ENCODE measurements at regions of chr3 and their contacts with region 1.

Region 1: DNA sequence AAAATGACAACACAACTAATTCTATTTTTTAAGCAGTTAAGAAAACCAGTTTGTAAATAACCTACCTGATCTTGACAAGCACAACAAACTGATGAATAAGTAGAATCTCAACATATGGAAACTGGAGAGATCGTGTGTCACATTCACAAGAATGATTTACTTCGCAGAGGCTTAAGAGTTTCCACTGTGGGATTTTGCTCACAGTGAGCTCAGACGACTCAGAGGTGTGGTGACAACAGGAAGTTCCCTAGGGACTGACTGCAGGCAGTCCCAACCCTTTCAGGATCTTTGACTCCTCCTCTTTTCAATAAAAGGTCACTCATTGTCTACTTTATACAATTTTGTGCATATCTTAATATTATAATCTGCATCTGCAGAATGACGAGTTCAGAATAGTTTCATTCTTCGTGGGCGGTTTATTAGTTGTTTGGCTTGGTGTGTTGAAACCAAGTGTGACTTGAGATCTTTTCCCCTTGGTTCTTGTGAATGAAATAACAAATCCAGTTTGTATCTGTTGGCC is at the start of gene LIPH:
- DNase-seq: peak; percentile 61 to 96
- H3K4me3 ChIP-seq: peak within 1 kb of the TSS; percentile 61
- H3K27ac ChIP-seq: peak within 1 kb of the TSS; percentile 93
- H3K4me1 ChIP-seq: peaks cover 81% of the 10 kb centered on the region
- H3K27me3 ChIP-seq: no peaks in the 10 kb centered on the region
- CTCF ChIP-seq: no peak
- total RNA-seq, gene LIPH: 38.4 and 44.7 TPM in 2 replicates

Region 2: DNA sequence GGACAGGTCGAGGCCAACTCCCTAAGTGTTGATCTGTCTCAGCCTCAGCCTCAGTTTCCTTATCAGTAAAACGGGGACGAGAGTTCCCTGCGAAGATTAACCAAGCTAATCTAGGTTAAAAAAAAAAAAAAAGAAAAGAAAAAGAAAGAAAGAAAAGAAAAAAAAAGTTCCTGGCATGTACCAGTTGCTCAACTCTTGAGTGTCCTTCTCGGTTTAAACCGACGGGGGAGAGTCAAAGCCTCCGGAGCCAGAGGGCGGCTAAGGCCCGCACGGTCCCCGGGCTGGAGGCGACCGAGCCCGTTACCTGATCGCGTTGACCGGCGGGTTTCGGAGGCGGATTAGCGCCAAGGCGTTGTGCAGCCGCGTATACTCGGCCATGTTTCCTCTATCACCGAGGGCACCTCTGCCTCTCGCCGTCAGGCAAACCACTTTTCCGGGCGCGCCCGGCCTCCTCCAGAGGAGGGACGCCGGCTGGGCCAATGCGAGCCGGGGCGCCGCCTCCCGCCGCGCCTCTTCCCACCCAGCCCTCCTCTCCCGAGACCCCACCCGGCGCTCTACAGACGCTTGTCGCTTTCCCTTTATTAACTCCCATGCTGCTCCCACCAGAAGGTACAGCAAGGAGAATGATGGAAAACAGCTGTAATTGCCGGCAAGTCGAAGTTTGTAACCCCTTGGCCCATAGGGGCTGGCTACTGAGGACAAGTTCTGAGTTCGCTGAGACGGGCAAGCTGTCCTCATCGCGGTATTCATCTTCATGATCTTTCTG is 298.6 kb before region 1 on chr3 and contains the start of gene EHHADH:
- CTCF ChIA-PET with region 1: no interaction called
- POLR2A ChIA-PET with region 1: interaction called, 12 read pairs
- intact Hi-C with region 1: no loop called
- DNase-seq: peak; percentile 52 to 75
- H3K4me3 ChIP-seq: peak within 1 kb of the TSS; percentile 65
- H3K27ac ChIP-seq: no peak within 1 kb of the TSS
- H3K4me1 ChIP-seq: no peaks in the 10 kb centered on the region
- H3K27me3 ChIP-seq: no peaks in the 10 kb centered on the region
- CTCF ChIP-seq: no peak
- total RNA-seq, gene EHHADH: 8.4 and 8.8 TPM in 2 replicates

Region 3: GRCh38 chr3:185572183-185572582 is 19.8 kb after region 1 on chr3:
- CTCF ChIA-PET with region 1: interaction called, 12 read pairs
- POLR2A ChIA-PET with region 1: no interaction called
- intact Hi-C with region 1: no loop called
- DNase-seq: no peak
- H3K4me3 ChIP-seq: no peak overlapping the region
- H3K27ac ChIP-seq: no peak overlapping the region
- H3K4me1 ChIP-seq: peaks cover 6% of the 10 kb centered on the region; the same call in 1 of the 2 replicates
- H3K27me3 ChIP-seq: no peaks in the 10 kb centered on the region
- CTCF ChIP-seq: no peak

Region 4: DNA sequence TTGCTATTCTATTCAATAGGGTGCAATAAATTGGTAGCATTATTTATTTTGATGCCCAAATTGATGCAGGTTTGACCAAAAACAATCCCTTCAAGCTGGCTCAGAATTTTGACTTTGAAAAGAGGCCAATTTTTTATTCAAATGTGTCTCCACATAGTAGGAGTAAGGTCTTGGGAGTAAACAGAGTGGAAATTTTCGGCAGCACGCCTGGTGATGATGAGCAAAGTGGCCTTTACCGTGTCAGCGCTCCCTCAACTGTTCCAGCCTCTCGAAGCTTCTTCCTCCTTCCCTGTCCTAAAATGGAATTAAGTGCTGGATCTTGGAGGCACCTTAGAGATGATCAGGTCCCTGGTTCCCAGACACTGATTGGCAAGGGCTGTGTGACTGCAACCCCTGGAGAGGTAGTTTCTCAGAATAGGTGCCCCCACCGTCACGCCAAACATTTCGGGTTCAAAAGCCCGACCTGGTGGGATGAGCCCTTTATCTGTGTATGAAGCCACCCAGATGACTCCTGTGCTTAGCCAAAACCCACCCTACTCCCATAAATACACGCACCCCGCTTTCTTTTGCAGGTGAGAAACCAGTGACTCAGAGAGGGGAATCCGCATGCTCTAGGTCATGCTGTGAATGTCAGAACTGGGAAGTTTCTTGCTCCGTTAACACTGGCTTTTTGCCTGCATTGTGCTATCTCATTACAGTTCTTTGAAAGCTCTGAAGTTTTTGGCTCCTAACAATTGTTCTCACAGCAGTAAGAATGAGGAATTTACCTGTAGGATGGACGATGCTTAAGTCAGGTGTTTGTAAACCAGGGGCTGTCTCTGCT is 902.7 kb after region 1 on chr3:
- CTCF ChIA-PET with region 1: no interaction called
- POLR2A ChIA-PET with region 1: interaction called, 10 read pairs
- intact Hi-C with region 1: no loop called
- DNase-seq: no peak
- H3K4me3 ChIP-seq: no peak overlapping the region
- H3K27ac ChIP-seq: no peak overlapping the region
- H3K4me1 ChIP-seq: peaks cover 3% of the 10 kb centered on the region; the same call in 1 of the 2 replicates
- H3K27me3 ChIP-seq: peaks cover 89% of the 10 kb centered on the region
- CTCF ChIP-seq: no peak

Measured in PC-9 (cell line).